ENCODE measurements at regions of chr12 and their contacts with region 1.

Region 1: GRCh38 chr12:55996715-55997534 is at the start of gene SUOX:
- DNase-seq: peak; percentile 99
- H3K4me3 ChIP-seq: peak within 1 kb of the TSS; percentile 60 to 63
- H3K27ac ChIP-seq: peak within 1 kb of the TSS; percentile 74 to 80
- H3K4me1 ChIP-seq: peaks cover 0 to 14% (median 9%) of the 10 kb centered on the region in 4 donors
- H3K27me3 ChIP-seq: no peaks in the 10 kb centered on the region
- CTCF ChIP-seq: no peak

Region 2: DNA sequence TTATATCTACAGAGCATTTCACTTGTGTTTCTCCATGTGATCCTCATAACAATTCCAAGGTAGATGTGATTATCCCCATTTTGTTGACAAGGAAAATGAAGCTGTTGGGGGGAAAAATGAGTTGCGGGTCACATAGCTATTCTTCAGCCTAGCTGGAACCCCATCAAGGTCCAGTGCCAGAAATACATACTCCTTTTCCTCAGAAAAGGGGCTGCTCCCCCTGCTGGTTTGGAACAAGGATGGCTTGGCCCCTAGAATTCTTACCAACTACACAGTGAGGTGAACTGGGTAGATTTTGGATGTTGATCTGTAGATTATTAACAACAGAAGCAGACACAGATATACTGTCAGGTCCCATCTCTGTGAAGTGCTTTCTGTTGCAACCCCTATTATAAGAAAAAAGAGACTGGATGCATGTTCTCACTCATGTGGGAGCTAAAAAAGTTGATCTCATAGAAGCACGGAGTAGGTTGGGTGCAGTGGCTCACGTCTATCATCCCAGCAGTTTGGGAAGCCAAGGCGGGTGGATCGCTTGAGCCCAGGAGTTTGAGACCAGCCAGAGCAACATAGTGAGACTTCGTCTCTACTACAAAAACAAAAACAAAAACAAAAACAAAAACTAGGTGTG is 32.9 kb after region 1 on chr12:
- intact Hi-C with region 1: loop called (anchors 5 kb)
- DNase-seq: no peak
- H3K4me3 ChIP-seq: no peak overlapping the region
- H3K27ac ChIP-seq: no peak overlapping the region
- H3K4me1 ChIP-seq: no peaks in the 10 kb centered on the region
- H3K27me3 ChIP-seq: no peaks in the 10 kb centered on the region
- CTCF ChIP-seq: peak; percentile 55 to 57

Region 3: GRCh38 chr12:56041552-56042429 is 44.9 kb after region 1 on chr12 and contains the start of gene RPS26:
- intact Hi-C with region 1: loop called (anchors 5 kb)
- DNase-seq: peak; percentile 97 to 98
- H3K4me3 ChIP-seq: peak within 1 kb of the TSS; percentile 75 to 81
- H3K27ac ChIP-seq: peak within 1 kb of the TSS; percentile 78 to 87
- H3K4me1 ChIP-seq: peaks cover 10 to 21% (median 17%) of the 10 kb centered on the region in 4 donors
- H3K27me3 ChIP-seq: no peaks in the 10 kb centered on the region
- CTCF ChIP-seq: peak; percentile 6 to 46

Region 4: DNA sequence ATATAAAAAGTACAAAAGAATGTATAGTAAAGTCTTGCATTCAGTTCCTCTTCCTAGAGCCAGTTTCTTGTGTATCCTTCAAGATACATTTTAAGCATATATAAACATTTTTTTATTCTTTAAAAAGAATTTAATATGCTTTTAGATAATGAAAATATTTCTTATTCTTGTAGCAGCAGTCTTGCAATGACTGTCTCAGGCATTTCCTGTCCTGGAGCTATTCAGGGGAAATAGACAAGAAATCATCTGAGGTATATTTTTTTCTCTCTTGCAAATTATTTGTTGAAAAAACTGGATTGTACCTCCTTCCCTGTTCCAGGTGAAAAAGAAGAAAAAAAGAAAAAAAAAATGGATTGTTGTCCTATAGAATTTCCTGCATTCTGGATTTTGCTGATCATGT is 66.1 kb after region 1 on chr12:
- intact Hi-C with region 1: no loop called
- DNase-seq: no peak
- H3K4me3 ChIP-seq: no peak overlapping the region
- H3K27ac ChIP-seq: no peak overlapping the region
- H3K4me1 ChIP-seq: no peaks in the 10 kb centered on the region
- H3K27me3 ChIP-seq: no peaks in the 10 kb centered on the region
- CTCF ChIP-seq: no peak

Region 5: DNA sequence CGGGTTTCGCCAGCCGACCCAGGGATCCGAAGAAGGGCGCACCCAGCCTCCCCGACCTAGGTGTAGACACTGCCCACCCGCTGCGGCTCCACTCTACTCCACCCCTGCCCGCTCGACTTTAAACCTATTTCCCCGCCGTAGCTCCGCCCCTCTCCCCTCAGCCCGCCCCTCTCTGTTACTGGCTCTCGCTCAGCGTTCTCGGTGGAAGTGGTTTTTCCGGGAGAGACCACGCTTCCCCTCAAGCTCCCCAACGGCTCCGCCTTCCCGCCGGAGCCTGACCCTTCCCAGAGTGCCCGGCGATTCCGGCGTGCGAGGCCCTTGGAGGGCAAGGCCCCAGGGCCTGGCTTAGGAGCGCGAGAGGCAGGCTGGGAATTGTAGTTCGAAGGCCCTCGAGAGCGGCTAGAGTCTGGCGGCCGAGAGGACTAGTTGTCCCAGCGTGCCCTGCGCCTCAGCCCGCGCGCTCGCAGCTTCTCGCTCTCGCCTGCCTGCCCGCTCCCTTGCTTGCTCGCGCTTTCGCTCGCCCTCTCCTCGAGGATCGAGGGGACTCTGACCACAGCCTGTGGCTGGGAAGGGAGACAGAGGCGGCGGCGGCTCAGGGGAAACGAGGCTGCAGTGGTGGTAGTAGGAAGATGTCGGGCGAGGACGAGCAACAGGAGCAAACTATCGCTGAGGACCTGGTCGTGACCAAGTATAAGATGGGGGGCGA is 107.3 kb after region 1 on chr12 and contains the start of gene PA2G4:
- intact Hi-C with region 1: loop called (anchors 10 kb)
- DNase-seq: peak; percentile 97 to 99
- H3K4me3 ChIP-seq: peak within 1 kb of the TSS; percentile 62 to 70
- H3K27ac ChIP-seq: peak within 1 kb of the TSS; percentile 80 to 86
- H3K4me1 ChIP-seq: peaks cover 0 to 23% (median 21%) of the 10 kb centered on the region in 4 donors
- H3K27me3 ChIP-seq: no peaks in the 10 kb centered on the region
- CTCF ChIP-seq: no peak

Measured in tibial artery (tissue), 4 donors.